Gastrocnemius medialis (tissue), 4 donors: ENCODE measurements at regions of chr19 and their contacts with region 1.

Region 1: GRCh38 chr19:10769533-10770491 is 51.9 kb downstream of the DNM2 start:
- DNase-seq: peak; percentile 69 to 80
- ATAC-seq: peak; percentile 94 to 96
- H3K4me3 ChIP-seq: peak overlapping the region in 1 of 4 donors; percentile 23
- H3K27ac ChIP-seq: peak overlapping the region; percentile 75 to 85 (median 82)
- H3K4me1 ChIP-seq: peaks cover 43 to 50% of the 10 kb centered on the region in 2 donors
- H3K27me3 ChIP-seq: no peaks in the 10 kb centered on the region
- CTCF ChIP-seq: peak in 4 of 5 experiments; percentile 35 to 61 (median 36)
- POLR2A ChIP-seq: no peak

Region 2: DNA sequence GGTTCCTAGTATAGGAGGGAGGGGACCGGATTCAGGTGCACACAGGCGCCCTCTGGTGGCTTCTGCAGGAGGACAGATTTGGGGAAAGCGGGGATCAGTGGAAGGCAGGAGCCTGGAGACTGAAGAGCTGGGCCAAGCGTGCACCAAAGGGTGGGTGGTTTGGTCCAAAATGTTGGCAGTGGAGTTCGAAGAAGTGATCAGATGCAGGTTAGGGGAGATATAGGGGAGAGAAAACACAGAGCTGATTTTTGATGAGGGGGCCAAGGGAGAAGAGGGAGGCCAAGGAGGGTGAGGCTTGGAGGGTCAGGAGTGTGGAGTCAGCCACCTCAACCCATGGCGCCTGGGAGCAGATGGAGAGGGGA is 94.7 kb after region 1 on chr19:
- in situ Hi-C with region 1: loop called in 2 of 4 experiments (anchors 5 to 10 kb)
- intact Hi-C with region 1: loop called (anchors 1 kb)
- DNase-seq: peak; percentile 59 to 75
- ATAC-seq: peak; percentile 82 to 84
- H3K4me3 ChIP-seq: no peak overlapping the region
- H3K27ac ChIP-seq: peak overlapping the region in 2 of 4 donors; percentile 19 to 22
- H3K4me1 ChIP-seq: peaks cover 4 to 7% of the 10 kb centered on the region in 2 donors
- H3K27me3 ChIP-seq: no peaks in the 10 kb centered on the region
- CTCF ChIP-seq: peak; percentile 78 to 92 (median 85)
- POLR2A ChIP-seq: no peak